Naive thymus-derived CD8-positive, alpha-beta T cell (primary cell): ENCODE measurements at regions of chr17 and their contacts with region 1.

Region 1: DNA sequence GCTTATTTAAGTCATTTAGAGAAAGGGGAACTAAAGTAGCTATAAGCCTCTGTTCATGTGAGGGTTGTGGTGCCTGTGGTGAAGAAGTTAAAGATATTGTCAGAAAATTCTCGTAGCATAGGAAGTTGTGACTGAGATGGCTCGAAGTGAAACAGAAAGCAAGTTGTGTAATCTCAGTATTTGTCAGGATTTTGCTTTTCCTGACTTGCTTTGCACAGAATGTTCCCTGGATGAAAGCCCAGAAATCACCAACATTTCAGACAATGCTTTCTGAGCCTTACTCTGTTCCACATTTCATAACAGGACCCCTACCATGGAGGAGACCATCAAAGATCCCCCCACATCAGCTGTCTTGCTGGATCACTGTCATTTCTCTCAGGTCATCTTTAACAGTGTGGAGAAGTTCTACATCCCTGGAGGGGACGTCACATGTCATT is 10.6 kb downstream of the CALCOCO2 start:
- DNase-seq: peak in 7 of 10 donors; percentile 6 to 75 (median 38)
- ATAC-seq: peak; percentile 89 to 93
- H3K4me3 Mint-ChIP-seq: peak overlapping the region; percentile 74 to 88 (median 84)
- H3K27ac Mint-ChIP-seq: peak overlapping the region; percentile 63 to 99 (median 95)
- H3K4me1 Mint-ChIP-seq: peaks cover 15 to 61% (median 50%) of the 10 kb centered on the region in 4 donors
- H3K27me3 Mint-ChIP-seq: no peaks in the 10 kb centered on the region

Region 2: GRCh38 chr17:48610282-48611211 is 230.9 kb before region 1 on chr17 and contains the start of gene HOXB7:
- POLR2A ChIA-PET with region 1: no interaction called
- DNase-seq: peak in 9 of 10 donors; percentile 39 to 66 (median 54)
- ATAC-seq: peak; percentile 6 to 38
- H3K4me3 Mint-ChIP-seq: peak within 1 kb of the TSS; percentile 88 to 97 (median 94)
- H3K27ac Mint-ChIP-seq: peak within 1 kb of the TSS in 4 of 10 donors; percentile 69 to 88 (median 74)
- H3K4me1 Mint-ChIP-seq: peaks cover 21 to 46% (median 36%) of the 10 kb centered on the region in 4 donors
- H3K27me3 Mint-ChIP-seq: peaks cover 29 to 91% (median 68%) of the 10 kb centered on the region in 5 donors
- polyA plus RNA-seq, gene HOXB7: 0.22 to 0.40 TPM in 2 of 3 donors, not detected in the other

Region 3: GRCh38 chr17:48715496-48716399 is 125.7 kb before region 1 on chr17:
- POLR2A ChIA-PET with region 1: no interaction called
- DNase-seq: no peak
- ATAC-seq: no peak
- H3K4me3 Mint-ChIP-seq: no peak overlapping the region
- H3K27ac Mint-ChIP-seq: no peak overlapping the region
- H3K4me1 Mint-ChIP-seq: peaks cover 6 to 17% (median 14%) of the 10 kb centered on the region in 4 donors
- H3K27me3 Mint-ChIP-seq: peaks cover 40 to 88% (median 68%) of the 10 kb centered on the region in 5 donors

Region 4: GRCh38 chr17:48830840-48831548 is 10.4 kb before region 1 on chr17 and contains the start of gene CALCOCO2:
- POLR2A ChIA-PET with region 1: interaction called, 15 read pairs
- DNase-seq: peak; percentile 62 to 91 (median 78)
- ATAC-seq: peak; percentile 84 to 86
- H3K4me3 Mint-ChIP-seq: peak within 1 kb of the TSS; percentile 88 to 100 (median 96)
- H3K27ac Mint-ChIP-seq: peak within 1 kb of the TSS; percentile 90 to 99 (median 98)
- H3K4me1 Mint-ChIP-seq: peaks cover 7 to 52% (median 45%) of the 10 kb centered on the region in 4 donors
- H3K27me3 Mint-ChIP-seq: no peaks in the 10 kb centered on the region
- polyA plus RNA-seq, gene CALCOCO2: 123 to 157 (median 127) TPM